Ascending aorta (tissue), 2 donors: ENCODE measurements at regions of chr6 and their contacts with region 1.

Region 1: GRCh38 chr6:159726918-159727716 is at the start of gene WTAP:
- DNase-seq: peak; percentile 87 to 97
- H3K4me3 ChIP-seq: peak within 1 kb of the TSS; percentile 95 to 100
- H3K27ac ChIP-seq: peak within 1 kb of the TSS; percentile 98 to 100
- H3K4me1 ChIP-seq: peaks cover 6 to 25% of the 10 kb centered on the region in 2 donors
- H3K27me3 ChIP-seq: no peaks in the 10 kb centered on the region
- CTCF ChIP-seq: no peak
- total RNA-seq, gene WTAP: 44.6 TPM

Region 2: DNA sequence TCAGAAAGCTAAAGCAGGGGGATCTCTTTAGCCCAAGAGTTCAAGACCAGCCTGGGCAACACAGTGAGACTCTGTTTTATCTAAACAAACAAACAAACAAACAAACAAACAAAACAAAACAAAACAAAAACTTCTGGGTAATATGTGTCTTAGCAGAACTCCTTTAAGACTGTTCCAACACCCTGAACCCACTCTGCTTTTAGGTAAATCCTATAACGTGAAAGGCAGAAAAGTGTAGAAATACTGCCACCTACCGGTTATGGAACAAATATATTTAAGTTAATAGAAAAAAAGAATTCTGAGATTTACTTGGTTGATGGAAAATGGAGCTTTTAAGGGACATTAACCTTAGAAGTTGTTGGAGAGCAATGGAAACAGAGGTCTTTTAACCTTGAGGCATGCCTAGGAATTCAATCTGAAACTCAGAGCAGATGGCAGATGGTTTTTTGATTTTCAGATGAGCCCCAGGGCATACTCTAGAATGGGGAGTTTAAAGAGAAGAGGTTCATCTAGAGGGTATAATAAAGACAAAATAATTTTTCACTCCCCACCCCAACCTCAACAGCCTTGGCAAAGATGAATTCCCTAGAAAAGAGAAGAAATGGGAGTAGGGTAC is 72.5 kb before region 1 on chr6:
- intact Hi-C with region 1: no loop called
- DNase-seq: no peak
- H3K4me3 ChIP-seq: no peak overlapping the region
- H3K27ac ChIP-seq: no peak overlapping the region
- H3K4me1 ChIP-seq: no peaks in the 10 kb centered on the region
- H3K27me3 ChIP-seq: no peaks in the 10 kb centered on the region
- CTCF ChIP-seq: peak; percentile 39 to 73 (median 56)

Region 3: DNA sequence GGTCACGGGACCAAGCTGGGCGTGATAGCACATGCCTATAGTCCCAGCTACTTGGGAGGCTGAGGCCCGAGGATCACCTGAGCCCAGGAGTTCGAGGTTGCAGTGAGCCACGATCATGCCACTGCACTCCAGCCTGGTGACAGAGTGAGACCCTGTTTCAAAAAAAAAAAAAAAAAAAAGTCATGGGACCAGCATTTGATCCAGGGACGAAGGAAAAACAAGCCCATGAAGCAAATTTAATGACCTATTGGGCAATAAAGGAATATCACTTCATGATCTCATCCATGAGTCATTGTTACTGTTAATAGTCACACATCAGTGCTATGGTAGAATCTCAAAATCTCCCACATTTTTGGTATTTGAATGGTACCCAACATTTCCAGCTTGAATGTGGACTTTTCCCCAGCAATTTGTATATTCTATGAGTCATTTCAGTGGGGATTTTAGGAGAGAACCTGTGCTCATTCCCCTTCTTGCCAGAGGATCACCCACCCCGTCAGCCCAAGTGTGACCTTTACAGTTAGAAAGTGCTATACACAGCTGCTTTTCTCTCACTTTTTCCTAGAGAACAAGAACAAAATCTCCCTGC is 25.6 kb before region 1 on chr6:
- intact Hi-C with region 1: loop called (anchors 1 kb)
- DNase-seq: peak in 1 of 2 donors; percentile 78
- H3K4me3 ChIP-seq: no peak overlapping the region
- H3K27ac ChIP-seq: peak overlapping the region; percentile 80 to 86
- H3K4me1 ChIP-seq: peaks cover 5 to 17% of the 10 kb centered on the region in 2 donors
- H3K27me3 ChIP-seq: no peaks in the 10 kb centered on the region
- CTCF ChIP-seq: no peak

Region 4: DNA sequence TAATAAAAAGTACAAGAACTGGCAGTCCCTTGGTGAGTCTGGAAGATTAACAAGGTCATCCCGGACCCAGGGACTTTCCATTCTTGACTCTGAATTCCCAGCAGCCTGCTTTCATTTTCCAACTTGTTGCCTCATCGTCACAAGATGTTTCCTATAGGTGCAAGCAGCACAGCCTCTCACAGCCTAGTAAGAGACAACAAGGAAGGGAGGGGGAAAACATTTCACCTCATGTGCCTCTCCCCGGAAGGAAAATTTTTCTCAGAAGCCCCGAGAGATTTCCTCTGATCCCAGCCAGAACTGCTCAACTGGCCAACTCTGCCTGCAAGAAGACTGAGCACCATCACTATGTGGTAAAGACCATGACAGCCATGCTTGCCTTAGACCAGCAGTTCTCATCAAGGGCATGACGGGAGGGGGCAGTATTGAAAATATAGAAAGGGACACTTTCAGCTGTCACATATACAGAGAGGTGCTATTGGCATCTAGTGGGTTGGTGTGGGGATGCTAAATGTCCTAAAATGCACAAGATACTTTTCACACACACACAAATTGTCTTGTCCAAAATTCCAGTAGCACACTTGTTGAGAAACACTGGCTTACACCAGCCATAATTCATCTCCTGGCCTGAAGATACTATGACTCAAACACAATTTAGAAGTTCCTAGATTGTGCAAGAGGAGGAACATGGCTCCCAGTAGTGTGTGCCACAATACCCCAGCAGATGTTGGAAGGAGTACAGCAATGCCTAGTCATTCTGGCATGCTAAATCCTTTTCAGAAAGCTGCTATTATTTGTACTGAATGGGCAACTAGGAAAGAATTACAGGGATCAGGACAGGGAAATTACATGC is 10.6 kb before region 1 on chr6:
- intact Hi-C with region 1: loop called (anchors 1 kb)
- DNase-seq: peak in 1 of 2 donors; percentile 87
- H3K4me3 ChIP-seq: peak overlapping the region; percentile 11 to 18
- H3K27ac ChIP-seq: peak overlapping the region; percentile 66 to 85
- H3K4me1 ChIP-seq: peaks cover 6 to 15% of the 10 kb centered on the region in 2 donors
- H3K27me3 ChIP-seq: no peaks in the 10 kb centered on the region
- CTCF ChIP-seq: no peak

Region 5: DNA sequence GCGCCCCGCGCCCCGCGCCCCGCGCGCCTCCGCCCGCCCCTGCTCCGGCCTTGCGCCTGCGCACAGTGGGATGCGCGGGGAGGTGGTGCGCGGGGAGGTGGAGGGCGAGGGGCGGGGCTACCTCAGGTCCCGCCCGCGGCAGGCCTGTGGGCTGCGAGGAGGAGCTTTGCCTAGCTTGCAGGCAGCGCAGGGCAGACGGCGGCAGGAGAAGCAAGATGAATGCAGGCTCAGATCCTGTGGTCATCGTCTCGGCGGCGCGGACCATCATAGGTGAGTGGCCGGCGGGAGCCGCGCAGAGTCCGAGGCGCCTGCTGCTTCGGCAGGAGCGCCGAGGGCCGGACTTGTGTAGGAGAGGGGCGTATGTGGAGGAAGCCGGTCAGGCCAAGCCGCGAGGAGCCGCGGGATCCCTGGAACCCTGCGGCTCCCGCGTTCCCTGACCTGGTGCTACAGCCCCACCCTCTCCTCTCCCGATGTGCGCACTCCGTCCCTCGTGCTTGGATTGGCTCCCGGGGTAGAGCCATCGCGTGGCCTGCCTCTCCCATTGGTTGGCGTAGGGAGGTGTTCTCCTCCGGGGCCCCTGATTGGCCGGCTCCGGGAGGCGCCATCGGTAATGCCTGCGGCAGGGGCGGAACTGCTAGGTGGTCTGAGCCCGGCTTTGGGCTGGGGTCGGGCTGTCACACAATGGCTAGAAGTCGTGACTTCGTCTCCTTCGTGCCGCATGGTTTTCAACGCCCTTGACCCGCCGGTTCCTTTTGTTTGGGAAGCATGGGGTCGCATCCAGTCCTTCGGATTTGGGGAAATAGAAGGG is 35.0 kb after region 1 on chr6 and contains the start of gene ACAT2:
- intact Hi-C with region 1: loop called (anchors 1 kb)
- DNase-seq: peak; percentile 89 to 98
- H3K4me3 ChIP-seq: peak within 1 kb of the TSS; percentile 80 to 99
- H3K27ac ChIP-seq: peak within 1 kb of the TSS; percentile 96 to 99
- H3K4me1 ChIP-seq: peaks cover 5 to 11% of the 10 kb centered on the region in 2 donors
- H3K27me3 ChIP-seq: no peaks in the 10 kb centered on the region
- CTCF ChIP-seq: peak in 1 of 3 experiments; percentile 18
- total RNA-seq, gene ACAT2: 0.85 TPM